ENCODE measurements at regions of chr1 and their contacts with region 1.

Region 1: DNA sequence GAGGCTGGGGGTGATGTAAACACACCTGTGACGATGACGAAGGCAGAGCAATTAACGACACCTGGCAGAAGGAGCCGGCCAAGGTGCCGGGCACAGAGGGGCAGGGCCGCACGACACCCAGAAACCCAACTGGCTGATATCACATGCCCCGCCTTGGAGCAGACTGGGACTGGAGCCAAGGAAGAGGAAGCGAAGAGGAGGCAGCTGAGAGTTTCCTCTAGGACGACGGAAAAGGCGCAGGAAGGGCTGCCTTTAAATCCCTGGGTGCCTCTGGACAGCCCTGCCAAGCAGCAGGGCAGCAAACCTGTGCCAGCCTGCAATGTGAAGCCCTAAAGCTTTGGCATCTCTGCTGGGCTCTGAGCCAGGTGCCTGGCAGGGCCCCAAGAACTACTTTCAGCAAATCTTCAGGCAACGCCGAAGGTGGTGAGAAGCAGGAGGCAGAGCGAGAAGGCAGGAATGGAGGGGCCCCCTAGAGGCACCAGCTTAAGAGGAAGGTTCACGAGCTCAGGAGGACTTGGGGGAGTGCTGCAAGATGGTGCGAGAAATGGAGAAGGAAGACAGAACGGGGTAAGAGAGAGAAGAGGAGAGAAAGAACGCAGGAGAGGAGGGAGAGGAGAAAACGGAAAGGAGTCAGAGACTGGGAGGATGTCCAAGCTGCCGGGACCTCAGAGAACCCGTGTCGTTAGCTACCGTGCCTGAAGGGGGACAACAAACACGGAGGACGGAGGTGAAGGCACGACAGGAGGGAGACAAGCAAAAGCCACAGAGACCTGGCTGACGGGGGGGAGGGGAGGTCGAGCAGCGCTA is 25.3 kb upstream of the PEF1 start:
- DNase-seq: peak; percentile 72 to 90
- ATAC-seq: peak; percentile 40 to 74 (median 63)
- H3K4me3 ChIP-seq: peak overlapping the region; percentile 56
- H3K27ac ChIP-seq: peak overlapping the region; percentile 54
- H3K4me1 ChIP-seq: peaks cover 34% of the 10 kb centered on the region
- H3K27me3 ChIP-seq: no peaks in the 10 kb centered on the region
- CTCF ChIP-seq: peak; percentile 8

Region 2: DNA sequence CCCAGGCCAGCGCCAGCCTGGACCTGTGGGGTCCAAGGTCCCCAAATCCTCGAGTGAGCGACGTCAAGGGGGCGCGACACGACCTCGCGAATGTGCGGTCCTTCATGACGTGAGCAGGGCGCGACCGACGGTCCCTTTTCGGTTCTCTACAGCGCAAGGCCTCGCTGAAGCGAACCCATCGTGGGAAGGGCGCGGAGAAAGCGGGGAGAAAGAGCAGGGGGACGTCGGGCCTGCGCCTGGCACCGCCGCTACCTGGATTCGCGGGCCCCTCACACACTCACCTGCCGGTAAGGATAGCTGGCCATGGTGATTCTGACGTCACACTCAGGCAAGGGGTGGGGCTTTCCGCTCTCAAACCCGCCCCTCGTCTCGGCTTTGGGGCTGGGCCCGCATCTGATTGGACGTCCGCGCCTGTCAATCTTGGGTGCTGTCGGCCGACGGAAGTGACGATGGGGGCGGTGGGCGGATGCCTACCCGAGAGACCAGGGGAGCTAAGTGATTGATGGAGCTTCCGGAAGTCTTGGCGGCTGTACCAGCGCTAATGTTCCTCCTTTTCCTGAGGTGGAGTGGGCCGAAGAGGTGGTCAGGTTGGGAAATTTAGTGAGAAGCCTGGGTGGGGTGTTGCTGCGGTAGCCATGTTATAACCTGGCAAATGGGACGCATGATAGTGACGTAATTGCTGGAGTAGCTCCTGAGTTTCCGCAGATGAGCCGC is 25.3 kb before region 1 on chr1 and contains the start of gene PEF1:
- intact Hi-C with region 1: no loop called
- DNase-seq: peak; percentile 99 to 100
- ATAC-seq: peak; percentile 94 to 97 (median 94)
- H3K4me3 ChIP-seq: peak within 1 kb of the TSS; percentile 97
- H3K27ac ChIP-seq: peak within 1 kb of the TSS; percentile 100
- H3K4me1 ChIP-seq: peaks cover 51% of the 10 kb centered on the region
- H3K27me3 ChIP-seq: no peaks in the 10 kb centered on the region
- CTCF ChIP-seq: no peak
- total RNA-seq, gene PEF1: 22.1 to 43.1 (median 29.7) TPM

Region 3: GRCh38 chr1:31715087-31715872 is 45.3 kb after region 1 on chr1:
- intact Hi-C with region 1: loop called in 1 of 2 experiments (anchors 5 kb)
- DNase-seq: peak; percentile 96 to 98
- ATAC-seq: peak; percentile 93 to 96 (median 94)
- H3K4me3 ChIP-seq: peak overlapping the region; percentile 66
- H3K27ac ChIP-seq: peak overlapping the region; percentile 91
- H3K4me1 ChIP-seq: peaks cover 12% of the 10 kb centered on the region
- H3K27me3 ChIP-seq: no peaks in the 10 kb centered on the region
- CTCF ChIP-seq: peak; percentile 82

Measured in psoas muscle (tissue), 8 donors.